A549 (cell line): ENCODE measurements at regions of chr20 and their contacts with region 1.

Region 1: DNA sequence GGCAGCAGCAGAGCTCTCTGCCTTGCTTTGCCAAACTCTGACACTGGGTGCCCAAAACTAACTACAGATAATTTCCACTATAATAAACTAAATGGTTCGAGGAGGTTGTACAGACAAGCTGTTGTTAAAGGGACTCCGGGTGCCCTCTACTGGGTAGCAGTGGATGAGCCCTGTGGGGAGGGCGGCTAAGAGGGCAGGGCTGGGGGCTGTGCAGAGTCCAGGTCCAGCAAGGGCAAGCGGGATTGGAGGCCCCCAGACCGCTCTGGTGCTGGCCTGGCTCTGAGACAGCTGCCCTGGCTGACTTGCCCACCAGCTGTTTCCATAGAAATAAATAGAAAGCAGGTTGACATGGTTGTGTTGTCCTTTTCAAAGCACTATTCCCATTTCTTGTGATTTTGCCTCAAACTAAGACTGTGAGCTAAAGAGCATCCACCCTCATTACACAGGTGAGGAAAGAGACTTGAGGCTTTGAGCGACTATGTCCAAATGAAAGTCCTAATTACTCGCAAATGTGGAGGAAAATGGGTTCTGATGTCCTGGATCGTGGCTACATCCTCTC is 167.6 kb upstream of the CST7 start:
- DNase-seq: peak; percentile 40 to 51
- ATAC-seq: peak; percentile 84 to 93
- H3K4me3 ChIP-seq: no peak overlapping the region
- H3K27ac ChIP-seq: peak overlapping the region in 1 of 2 experiments; percentile 20; a peak in 1 of 6 replicates
- H3K4me1 ChIP-seq: no peaks in the 10 kb centered on the region
- CTCF ChIP-seq: peak; percentile 69
- EP300 ChIP-seq: no peak
- POLR2A ChIP-seq: no peak
- RAD21 ChIP-seq: peak; percentile 91 to 92

Region 2: GRCh38 chr20:24160563-24161375 is 620.7 kb before region 1 on chr20:
- CTCF ChIA-PET with region 1: interaction called, 10 read pairs
- POLR2A ChIA-PET with region 1: no interaction called
- DNase-seq: peak; percentile 57 to 61
- ATAC-seq: peak; percentile 83 to 95; a peak in 5 of 6 replicates
- H3K4me3 ChIP-seq: no peak overlapping the region
- H3K27ac ChIP-seq: no peak overlapping the region
- H3K4me1 ChIP-seq: no peaks in the 10 kb centered on the region
- CTCF ChIP-seq: peak; percentile 64
- EP300 ChIP-seq: no peak
- POLR2A ChIP-seq: no peak
- RAD21 ChIP-seq: peak; percentile 54 to 60; a peak in 4 of 5 replicates

Region 3: DNA sequence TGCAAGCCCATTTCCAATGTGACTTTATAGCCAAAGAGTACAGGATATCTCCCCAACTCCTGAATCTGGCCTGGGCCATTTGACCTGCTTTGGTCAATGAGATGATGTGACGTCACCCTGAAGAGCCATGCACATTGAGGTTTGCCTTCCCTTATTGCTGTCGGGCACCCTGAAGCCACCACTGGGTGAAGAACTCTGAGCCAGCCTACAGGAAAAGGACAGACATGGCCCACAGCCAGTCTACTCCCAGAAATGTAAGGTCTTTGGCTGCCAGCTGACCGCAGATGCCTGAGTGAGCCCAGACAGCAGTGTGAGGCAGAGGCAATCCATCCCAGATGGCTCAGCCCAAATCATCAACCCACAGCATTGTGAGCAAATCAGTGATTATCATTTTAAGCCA is 315.8 kb before region 1 on chr20:
- CTCF ChIA-PET with region 1: interaction called, 10 read pairs
- POLR2A ChIA-PET with region 1: no interaction called
- DNase-seq: no peak
- ATAC-seq: no peak
- H3K4me3 ChIP-seq: no peak overlapping the region
- H3K27ac ChIP-seq: no peak overlapping the region
- H3K4me1 ChIP-seq: 0 out of 3 replicates have a peak, but pooled peaks cover 3% of the 10 kb centered on the region
- CTCF ChIP-seq: no peak
- EP300 ChIP-seq: no peak
- POLR2A ChIP-seq: no peak
- RAD21 ChIP-seq: no peak

Region 4: GRCh38 chr20:24657196-24657595 is 124.3 kb before region 1 on chr20:
- CTCF ChIA-PET with region 1: interaction called, 12 read pairs
- POLR2A ChIA-PET with region 1: no interaction called
- DNase-seq: peak; percentile 38 to 39
- ATAC-seq: peak in 1 of 2 experiments; percentile 49; a peak in 3 of 6 replicates
- H3K4me3 ChIP-seq: no peak overlapping the region
- H3K27ac ChIP-seq: peak overlapping the region; percentile 8 to 46; a peak in 4 of 6 replicates
- H3K4me1 ChIP-seq: peaks cover 36% of the 10 kb centered on the region
- CTCF ChIP-seq: no peak
- EP300 ChIP-seq: no peak
- POLR2A ChIP-seq: no peak
- RAD21 ChIP-seq: no peak; a peak in 1 of 5 replicates

Region 5: GRCh38 chr20:24705486-24705885 is 76.0 kb before region 1 on chr20:
- CTCF ChIA-PET with region 1: interaction called, 11 read pairs
- POLR2A ChIA-PET with region 1: no interaction called
- DNase-seq: no peak
- ATAC-seq: no peak
- H3K4me3 ChIP-seq: no peak overlapping the region
- H3K27ac ChIP-seq: no peak overlapping the region
- H3K4me1 ChIP-seq: no peaks in the 10 kb centered on the region
- CTCF ChIP-seq: no peak
- EP300 ChIP-seq: no peak
- POLR2A ChIP-seq: no peak
- RAD21 ChIP-seq: 0 out of 5 replicates have a peak, but pooled peaks of 1 of the 2 experiments have one; percentile 16

Region 6: GRCh38 chr20:24795436-24795835 is 13.9 kb after region 1 on chr20:
- CTCF ChIA-PET with region 1: interaction called, 66 read pairs
- POLR2A ChIA-PET with region 1: no interaction called
- DNase-seq: no peak
- ATAC-seq: no peak
- H3K4me3 ChIP-seq: no peak overlapping the region
- H3K27ac ChIP-seq: no peak overlapping the region
- H3K4me1 ChIP-seq: no peaks in the 10 kb centered on the region
- CTCF ChIP-seq: no peak
- EP300 ChIP-seq: no peak
- POLR2A ChIP-seq: no peak
- RAD21 ChIP-seq: no peak

Region 7: DNA sequence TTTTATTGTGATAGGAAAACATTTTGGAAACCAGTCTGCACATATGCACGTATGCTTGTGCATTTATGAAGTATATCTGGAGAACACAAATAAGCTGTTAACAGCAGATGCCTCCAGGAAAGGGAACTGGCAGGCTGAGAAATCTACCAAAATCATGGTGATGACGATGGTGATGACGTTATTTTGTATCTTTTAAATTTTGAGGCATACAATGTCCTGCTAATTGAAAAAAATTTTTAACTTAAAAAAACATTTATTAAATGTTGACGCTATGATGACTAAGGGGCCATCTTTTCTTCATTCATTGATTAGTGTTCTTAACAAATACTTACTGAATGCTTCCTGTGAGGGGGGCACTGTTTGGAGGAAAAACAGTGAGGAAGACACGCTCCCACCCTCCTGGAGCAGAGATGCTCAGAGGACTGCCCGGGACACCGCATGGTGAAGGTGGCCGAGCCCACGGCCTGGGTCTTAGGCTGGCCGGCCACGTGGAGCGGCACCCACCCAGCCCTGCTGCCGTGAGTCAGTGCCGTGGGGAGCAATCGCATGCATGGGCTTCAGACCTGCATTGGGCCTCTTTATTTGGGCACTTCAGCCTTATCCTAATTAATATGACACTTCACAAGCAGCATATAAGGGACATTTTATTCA is 398.1 kb after region 1 on chr20:
- CTCF ChIA-PET with region 1: no interaction called
- POLR2A ChIA-PET with region 1: no interaction called
- DNase-seq: no peak
- ATAC-seq: no peak
- H3K4me3 ChIP-seq: no peak overlapping the region
- H3K27ac ChIP-seq: peak overlapping the region; percentile 65 to 74; a peak in 5 of 6 replicates
- H3K4me1 ChIP-seq: peaks cover 28% of the 10 kb centered on the region
- CTCF ChIP-seq: 0 out of 3 replicates have a peak, but pooled peaks have one; percentile 2
- EP300 ChIP-seq: no peak
- POLR2A ChIP-seq: no peak
- RAD21 ChIP-seq: no peak